ENCODE measurements at regions of chr14 and their contacts with region 1.

Region 1: DNA sequence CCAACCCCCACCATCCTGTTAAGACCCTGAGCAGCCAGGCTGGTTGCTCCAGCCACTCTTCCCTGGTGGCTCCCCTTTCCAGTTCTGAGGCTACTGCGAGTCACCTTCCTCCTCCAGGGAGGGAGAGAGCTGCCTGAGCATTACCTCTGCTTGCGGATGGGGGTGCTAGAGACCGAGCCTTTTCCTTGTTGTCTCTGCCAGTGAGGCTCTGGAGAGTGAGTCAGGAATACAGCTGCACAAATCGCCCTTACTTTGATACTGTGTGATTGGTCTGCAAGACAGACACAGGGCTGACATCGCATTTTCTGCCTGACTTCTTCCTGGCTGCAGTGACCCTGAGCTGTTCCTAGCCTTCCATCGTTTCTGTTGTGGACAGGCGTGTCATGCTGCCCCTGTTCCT is 94.3 kb downstream of the SLC25A47 start:
- DNase-seq: peak; percentile 53 to 96 (median 72)

Region 2: GRCh38 chr14:100108042-100108825 is 309.2 kb before region 1 on chr14:
- intact Hi-C with region 1: no loop called
- DNase-seq: peak; percentile 67 to 98 (median 84)

Region 3: DNA sequence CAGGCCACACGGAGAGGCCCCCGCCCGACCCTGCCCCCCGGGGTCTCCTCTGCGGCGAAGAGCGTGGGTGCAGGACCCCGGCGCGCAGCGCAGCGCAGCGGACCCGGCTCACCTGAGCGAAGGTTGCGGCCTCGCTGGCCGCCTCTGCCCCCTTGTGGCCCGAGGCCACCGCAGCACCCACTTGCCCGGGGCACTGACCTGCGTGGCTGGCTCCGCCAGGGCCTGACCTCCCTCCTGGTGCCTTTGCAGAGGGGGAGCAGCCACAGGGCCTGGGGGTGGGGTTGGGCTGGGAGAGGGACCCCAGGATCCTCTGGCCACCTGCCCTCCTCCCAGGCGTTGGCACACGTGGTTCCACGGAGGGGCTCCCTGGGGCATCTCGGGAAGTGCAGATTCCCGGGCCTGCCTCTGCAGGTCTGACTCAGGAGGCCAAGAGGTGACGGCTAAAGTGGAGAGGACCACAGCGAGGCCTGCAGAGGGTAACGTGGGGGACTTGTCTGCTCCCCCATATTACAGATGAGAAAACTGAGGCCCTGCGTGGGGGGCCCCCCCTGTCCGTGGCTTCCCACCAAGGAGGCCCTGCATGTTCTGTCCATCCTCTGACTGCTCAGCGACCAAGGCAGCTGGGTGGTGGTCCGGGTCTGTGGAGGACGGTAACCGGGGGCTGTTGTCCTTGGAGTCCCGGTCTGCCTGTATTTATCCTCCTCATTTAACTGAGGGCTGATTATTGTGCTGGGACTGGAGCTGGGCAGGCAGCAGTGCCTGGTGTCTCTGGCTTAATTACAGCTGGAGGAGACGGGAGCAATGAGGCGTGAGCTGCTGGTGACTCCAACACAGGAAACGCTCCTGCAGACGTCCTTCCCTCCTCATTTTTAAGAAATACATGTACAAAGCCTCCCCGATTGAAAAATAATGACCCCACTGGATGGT is 237.6 kb after region 1 on chr14:
- intact Hi-C with region 1: loop called (anchors 10 kb)
- DNase-seq: peak in 1 of 10 donors; percentile 70

Measured in posterior cingulate gyrus (tissue), 11 donors.